Ovary (tissue), 10 donors: ENCODE measurements at regions of chr2 and their contacts with region 1.

Region 1: GRCh38 chr2:74653985-74654882 is at the start of gene SEMA4F:
- DNase-seq: peak; percentile 96 to 98 (median 97)
- H3K4me3 ChIP-seq: peak within 1 kb of the TSS; percentile 79
- H3K27ac ChIP-seq: peak within 1 kb of the TSS in 1 of 2 donors; percentile 26
- H3K4me1 ChIP-seq: peaks cover 2% of the 10 kb centered on the region
- H3K27me3 ChIP-seq: no peaks in the 10 kb centered on the region
- CTCF ChIP-seq: no peak
- EP300 ChIP-seq: no peak
- POLR2A ChIP-seq: no peak
- total RNA-seq, gene SEMA4F: 6.2 to 13.5 (median 7.4) TPM

Region 2: DNA sequence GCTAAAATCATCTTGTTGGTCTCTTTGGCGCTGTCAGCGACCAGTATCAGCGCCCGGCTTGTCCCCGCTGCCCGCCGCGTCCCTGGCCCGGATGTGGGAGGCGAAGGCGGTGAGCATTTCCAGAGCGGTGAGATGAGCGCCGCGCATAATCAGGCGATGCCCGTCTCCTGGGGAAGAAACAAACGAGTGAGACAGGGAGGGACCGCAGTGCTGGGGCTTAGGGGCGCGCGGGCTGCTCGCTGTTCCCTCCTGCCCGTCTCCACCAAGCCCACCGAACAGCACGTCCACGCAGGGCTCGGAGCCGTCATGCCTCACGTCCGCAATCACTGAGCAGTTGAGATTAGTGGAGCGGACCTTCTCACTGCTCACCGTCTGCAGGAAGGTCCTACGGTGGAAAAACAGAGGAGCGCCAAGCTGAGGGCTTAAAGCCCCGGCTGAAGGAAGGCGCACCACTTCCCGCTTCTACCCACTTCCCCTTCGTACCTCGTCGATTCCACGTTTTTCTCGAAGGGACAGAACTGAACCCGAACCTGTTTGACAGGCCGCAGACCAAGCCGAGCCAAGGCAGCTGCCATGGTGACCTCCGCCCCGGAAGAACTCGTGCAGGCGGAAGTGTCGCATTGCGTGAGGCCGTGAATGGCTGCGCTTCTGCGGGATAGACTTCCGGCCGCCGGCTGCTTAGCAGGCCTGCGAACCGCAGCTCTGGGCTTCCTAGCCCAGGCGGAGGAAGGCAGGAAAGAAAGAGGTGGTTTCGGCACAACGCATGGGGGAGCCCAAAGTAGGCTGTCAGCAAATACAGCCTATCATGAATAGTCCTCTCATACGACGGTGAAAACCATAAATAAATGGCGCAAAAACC is 181.9 kb before region 1 on chr2 and contains the start of gene MRPL53:
- intact Hi-C with region 1: loop called in 1 of 4 experiments (anchors 5 kb)
- DNase-seq: peak; percentile 92 to 97 (median 95)
- H3K4me3 ChIP-seq: peak within 1 kb of the TSS; percentile 47
- H3K27ac ChIP-seq: peak within 1 kb of the TSS; percentile 53 to 83
- H3K4me1 ChIP-seq: peaks cover 5% of the 10 kb centered on the region
- H3K27me3 ChIP-seq: no peaks in the 10 kb centered on the region
- CTCF ChIP-seq: no peak
- EP300 ChIP-seq: peak; percentile 27
- POLR2A ChIP-seq: peak; percentile 70
- total RNA-seq, gene MRPL53: 21.9 to 105 (median 85.1) TPM